Dendritic cell treated with granulocyte-macrophage colony-stimulating factor and Interleukin-4, amounts not matched to agents 40 ng/mL and 50 ng/mL, for 4 days (primary cell): ENCODE measurements at regions of chr5 and their contacts with region 1.

Region 1: GRCh38 chr5:176959051-176959450 is 47.5 kb downstream of the UIMC1 start:
- H3K4me3 Mint-ChIP-seq: no peak overlapping the region
- H3K27ac Mint-ChIP-seq: no peak overlapping the region
- H3K4me1 Mint-ChIP-seq: no peaks in the 10 kb centered on the region
- H3K27me3 Mint-ChIP-seq: no peaks in the 10 kb centered on the region

Region 2: GRCh38 chr5:176660860-176661641 is 298.0 kb before region 1 on chr5:
- intact Hi-C with region 1: loop called (anchors 2 kb)
- H3K4me3 Mint-ChIP-seq: no peak overlapping the region
- H3K27ac Mint-ChIP-seq: no peak overlapping the region
- H3K4me1 Mint-ChIP-seq: peaks cover 23% of the 10 kb centered on the region
- H3K27me3 Mint-ChIP-seq: peaks cover 47% of the 10 kb centered on the region

Region 3: DNA sequence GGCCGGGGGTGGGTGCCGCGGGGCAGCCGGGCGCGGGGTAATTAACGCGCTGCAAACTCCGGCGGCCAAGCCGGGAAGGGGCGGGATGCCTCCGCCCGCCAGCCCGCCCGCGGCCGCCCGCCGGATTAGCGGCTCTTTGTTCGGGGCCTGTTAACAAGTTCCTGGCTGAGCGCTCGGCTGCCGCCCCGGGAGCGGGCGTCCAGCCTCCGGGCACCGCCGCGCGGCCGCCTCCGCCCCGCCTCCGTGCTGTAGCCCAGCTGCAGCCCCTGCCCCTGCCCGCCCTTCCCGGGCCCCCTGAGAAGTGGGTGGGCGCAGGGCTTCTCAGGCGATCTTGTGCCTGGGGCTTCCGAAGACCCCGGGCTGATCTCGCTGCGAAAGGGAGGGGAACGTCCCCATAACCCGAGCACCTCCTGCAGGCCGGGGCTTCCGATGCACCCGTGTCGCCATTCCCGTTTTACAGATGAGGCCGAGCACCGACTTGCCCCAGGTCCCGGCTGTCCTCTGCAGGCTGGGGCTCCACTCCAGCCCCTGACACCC is 141.1 kb before region 1 on chr5:
- intact Hi-C with region 1: loop called (anchors 5 kb)
- H3K4me3 Mint-ChIP-seq: peak overlapping the region; percentile 44
- H3K27ac Mint-ChIP-seq: no peak overlapping the region
- H3K4me1 Mint-ChIP-seq: peaks cover 9% of the 10 kb centered on the region
- H3K27me3 Mint-ChIP-seq: peaks cover 83% of the 10 kb centered on the region